ENCODE measurements at regions of chr2 and their contacts with region 1.

Region 1: GRCh38 chr2:96536445-96537065 is at the start of gene ARID5A:
- DNase-seq: peak; percentile 97
- H3K4me3 ChIP-seq: peak within 1 kb of the TSS; percentile 86 to 99 (median 96)
- H3K27ac ChIP-seq: peak within 1 kb of the TSS; percentile 97 to 99 (median 98)
- H3K4me1 ChIP-seq: peaks cover 0 to 88% (median 78%) of the 10 kb centered on the region in 4 donors
- H3K27me3 ChIP-seq: no peaks in the 10 kb centered on the region
- CTCF ChIP-seq: peak; percentile 31 to 76 (median 58)
- EP300 ChIP-seq: peak in 1 of 4 donors; percentile 22
- POLR2A ChIP-seq: peak; percentile 29 to 79
- total RNA-seq, gene ARID5A: 14.3 to 179 (median 30.4) TPM

Region 2: GRCh38 chr2:96099861-96100798 is 436.4 kb before region 1 on chr2:
- intact Hi-C with region 1: no loop called
- DNase-seq: peak; percentile 45
- H3K4me3 ChIP-seq: no peak overlapping the region
- H3K27ac ChIP-seq: peak overlapping the region in 1 of 4 donors; percentile 18
- H3K4me1 ChIP-seq: no peaks in the 10 kb centered on the region
- H3K27me3 ChIP-seq: no peaks in the 10 kb centered on the region
- CTCF ChIP-seq: no peak
- EP300 ChIP-seq: no peak
- POLR2A ChIP-seq: no peak

Region 3: DNA sequence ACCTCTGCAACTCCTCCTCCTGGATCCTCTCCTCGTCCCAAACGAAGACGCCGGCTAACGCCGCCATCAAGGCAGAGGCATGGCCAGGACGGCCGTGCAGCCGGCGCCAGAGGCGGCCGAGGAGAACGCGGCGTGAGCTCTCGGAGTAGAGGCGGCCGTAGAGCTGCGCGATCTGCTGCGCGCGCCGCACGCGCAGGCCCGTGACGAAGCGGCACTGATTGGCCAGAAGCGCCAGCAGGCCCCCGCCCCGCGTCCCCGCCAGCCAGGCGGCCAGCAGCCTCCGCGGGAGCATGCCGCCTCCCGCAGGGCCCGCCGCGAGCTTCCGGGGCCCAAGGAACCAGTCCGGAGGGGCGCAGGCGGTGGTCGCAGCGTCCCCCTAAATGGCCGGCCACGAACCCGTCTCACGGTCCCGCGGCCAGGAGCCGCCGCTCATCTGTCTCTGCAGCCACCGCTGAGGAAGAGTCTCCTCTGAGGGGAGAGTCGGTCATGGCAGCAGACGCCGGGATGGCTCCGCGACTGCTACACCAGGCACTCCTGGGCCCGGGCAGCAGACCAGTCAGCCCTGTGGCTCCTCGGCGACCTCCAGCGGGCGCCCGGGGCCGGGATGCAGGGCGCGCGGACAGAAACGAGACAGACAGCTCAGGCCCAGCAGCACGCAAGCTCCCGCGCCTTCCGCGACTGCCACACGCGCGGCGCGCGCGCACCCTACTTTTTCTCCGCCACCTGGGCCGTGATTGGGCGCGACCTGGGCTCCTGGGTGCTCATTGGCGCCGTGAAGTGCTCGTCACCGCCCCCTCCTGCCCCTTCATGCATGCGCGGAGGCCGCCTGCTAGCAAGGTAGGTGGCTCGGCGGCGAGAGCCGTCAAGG is 328.2 kb before region 1 on chr2 and contains the start of gene STARD7:
- intact Hi-C with region 1: loop called (anchors 5 kb)
- DNase-seq: peak; percentile 99
- H3K4me3 ChIP-seq: peak within 1 kb of the TSS; percentile 60 to 99 (median 86)
- H3K27ac ChIP-seq: peak within 1 kb of the TSS; percentile 89 to 98 (median 94)
- H3K4me1 ChIP-seq: peaks cover 0 to 53% (median 51%) of the 10 kb centered on the region in 4 donors
- H3K27me3 ChIP-seq: no peaks in the 10 kb centered on the region
- CTCF ChIP-seq: no peak
- EP300 ChIP-seq: no peak
- POLR2A ChIP-seq: peak in 1 of 2 donors; percentile 96
- total RNA-seq, gene STARD7: 50.4 to 88.5 (median 73.1) TPM

Region 4: GRCh38 chr2:96336104-96336775 is 200.3 kb before region 1 on chr2:
- intact Hi-C with region 1: loop called (anchors 5 kb)
- DNase-seq: no peak
- H3K4me3 ChIP-seq: peak overlapping the region; percentile 52 to 69 (median 62)
- H3K27ac ChIP-seq: peak overlapping the region; percentile 86 to 91 (median 88)
- H3K4me1 ChIP-seq: peaks cover 0 to 18% (median 8%) of the 10 kb centered on the region in 4 donors
- H3K27me3 ChIP-seq: no peaks in the 10 kb centered on the region
- CTCF ChIP-seq: no peak
- EP300 ChIP-seq: no peak
- POLR2A ChIP-seq: peak in 1 of 2 donors; percentile 19

Region 5: GRCh38 chr2:96638144-96639121 is 101.9 kb after region 1 on chr2 and contains the start of gene KANSL3:
- intact Hi-C with region 1: loop called (anchors 5 kb)
- DNase-seq: peak; percentile 96
- H3K4me3 ChIP-seq: peak within 1 kb of the TSS; percentile 65 to 76 (median 72)
- H3K27ac ChIP-seq: peak within 1 kb of the TSS; percentile 92 to 98 (median 92)
- H3K4me1 ChIP-seq: peaks cover 3 to 38% (median 29%) of the 10 kb centered on the region in 4 donors
- H3K27me3 ChIP-seq: no peaks in the 10 kb centered on the region
- CTCF ChIP-seq: no peak
- EP300 ChIP-seq: peak in 1 of 4 donors; percentile 63
- POLR2A ChIP-seq: peak; percentile 76 to 85
- total RNA-seq, gene KANSL3: 35.4 to 55.0 (median 47.7) TPM

Region 6: GRCh38 chr2:96868555-96869280 is 332.2 kb after region 1 on chr2:
- intact Hi-C with region 1: loop called (anchors 10 kb)
- DNase-seq: peak; percentile 97
- H3K4me3 ChIP-seq: peak overlapping the region; percentile 65 to 98 (median 96)
- H3K27ac ChIP-seq: peak overlapping the region; percentile 99 to 100 (median 100)
- H3K4me1 ChIP-seq: peaks cover 0 to 71% (median 67%) of the 10 kb centered on the region in 4 donors
- H3K27me3 ChIP-seq: no peaks in the 10 kb centered on the region
- CTCF ChIP-seq: peak; percentile 17 to 72 (median 23)
- EP300 ChIP-seq: no peak
- POLR2A ChIP-seq: no peak

Region 7: DNA sequence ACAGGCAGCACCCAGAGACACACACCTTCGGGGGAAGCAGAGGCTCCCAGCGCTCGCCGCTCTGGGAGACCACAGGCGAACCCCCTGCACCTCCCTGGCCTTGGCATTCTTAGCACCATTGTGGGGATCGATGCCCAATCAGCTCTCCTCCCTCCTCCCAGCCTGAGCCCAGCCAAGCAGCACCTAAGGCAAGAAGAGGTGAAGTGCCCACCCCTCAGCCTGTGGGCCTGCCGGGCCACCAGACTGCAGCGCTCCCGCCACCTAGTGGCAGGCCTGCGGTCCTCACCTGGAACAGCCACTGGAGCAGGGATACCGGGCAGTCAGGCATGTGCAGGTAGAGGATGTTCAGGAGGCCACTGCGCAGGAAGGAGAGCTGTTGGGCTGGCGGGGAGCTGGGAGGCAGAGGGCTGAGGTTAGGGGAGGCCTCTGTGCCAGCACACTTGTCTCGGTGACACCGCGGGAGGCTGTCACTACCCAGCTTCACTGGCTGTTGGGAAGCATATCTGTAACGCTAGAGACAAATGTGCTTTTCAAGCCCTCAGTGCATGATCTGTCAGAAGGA is 414.6 kb after region 1 on chr2:
- intact Hi-C with region 1: loop called (anchors 5 kb)
- DNase-seq: peak; percentile 87
- H3K4me3 ChIP-seq: no peak overlapping the region
- H3K27ac ChIP-seq: peak overlapping the region; percentile 72 to 88 (median 82)
- H3K4me1 ChIP-seq: peaks cover 0 to 62% (median 55%) of the 10 kb centered on the region in 4 donors
- H3K27me3 ChIP-seq: no peaks in the 10 kb centered on the region
- CTCF ChIP-seq: peak; percentile 93 to 98 (median 96)
- EP300 ChIP-seq: no peak
- POLR2A ChIP-seq: no peak

Region 8: GRCh38 chr2:97663965-97664635 is 1127.5 kb after region 1 on chr2 and contains the start of gene ACTR1B:
- intact Hi-C with region 1: loop called (anchors 5 kb)
- DNase-seq: peak; percentile 99
- H3K4me3 ChIP-seq: peak within 1 kb of the TSS; percentile 65 to 83 (median 76)
- H3K27ac ChIP-seq: peak within 1 kb of the TSS; percentile 93 to 98 (median 97)
- H3K4me1 ChIP-seq: peaks cover 0 to 38% (median 28%) of the 10 kb centered on the region in 4 donors
- H3K27me3 ChIP-seq: no peaks in the 10 kb centered on the region
- CTCF ChIP-seq: peak; percentile 62 to 72 (median 64)
- EP300 ChIP-seq: peak in 1 of 4 donors; percentile 66
- POLR2A ChIP-seq: peak; percentile 62 to 82
- total RNA-seq, gene ACTR1B: 63.0 to 85.3 (median 77.6) TPM